ENCODE measurements at regions of chr1 and their contacts with region 1.

Region 1: DNA sequence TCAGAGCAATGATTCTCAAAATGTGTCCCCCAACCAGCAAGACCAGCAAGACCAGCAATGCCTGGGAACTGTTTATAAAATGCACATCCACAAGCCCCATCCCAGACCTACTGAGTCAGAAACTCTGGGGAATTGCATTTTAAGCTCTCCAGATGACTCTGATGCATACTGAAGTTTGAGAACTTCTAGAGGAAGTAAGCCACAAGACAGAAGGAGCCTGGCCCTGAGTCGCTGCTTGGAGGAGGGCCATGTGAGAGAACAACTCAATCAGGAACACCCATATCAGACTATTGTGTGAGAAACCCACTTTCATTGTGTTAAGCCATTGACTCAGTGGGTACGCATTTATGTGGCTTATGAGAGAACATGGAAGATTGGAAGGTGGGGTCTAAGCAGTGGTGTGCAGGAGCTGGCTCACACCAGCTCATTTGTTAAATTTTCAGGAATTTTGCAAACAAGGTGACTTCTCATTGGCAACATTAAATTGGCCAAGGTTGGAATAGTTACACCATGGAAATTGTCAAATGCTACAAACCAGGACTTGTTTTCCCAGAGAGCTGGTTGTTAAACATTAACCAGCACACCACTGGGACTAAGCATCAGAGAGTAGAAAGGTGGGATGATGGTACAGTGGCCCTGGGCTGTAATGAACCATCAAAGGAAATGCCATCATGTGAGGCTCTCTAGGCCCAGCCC is 38.9 kb downstream of the ATP1A1 start:
- DNase-seq: no peak
- H3K4me3 Mint-ChIP-seq: no peak overlapping the region
- H3K27ac Mint-ChIP-seq: no peak overlapping the region
- H3K4me1 Mint-ChIP-seq: peaks cover 33% of the 10 kb centered on the region
- H3K27me3 Mint-ChIP-seq: no peaks in the 10 kb centered on the region

Region 2: DNA sequence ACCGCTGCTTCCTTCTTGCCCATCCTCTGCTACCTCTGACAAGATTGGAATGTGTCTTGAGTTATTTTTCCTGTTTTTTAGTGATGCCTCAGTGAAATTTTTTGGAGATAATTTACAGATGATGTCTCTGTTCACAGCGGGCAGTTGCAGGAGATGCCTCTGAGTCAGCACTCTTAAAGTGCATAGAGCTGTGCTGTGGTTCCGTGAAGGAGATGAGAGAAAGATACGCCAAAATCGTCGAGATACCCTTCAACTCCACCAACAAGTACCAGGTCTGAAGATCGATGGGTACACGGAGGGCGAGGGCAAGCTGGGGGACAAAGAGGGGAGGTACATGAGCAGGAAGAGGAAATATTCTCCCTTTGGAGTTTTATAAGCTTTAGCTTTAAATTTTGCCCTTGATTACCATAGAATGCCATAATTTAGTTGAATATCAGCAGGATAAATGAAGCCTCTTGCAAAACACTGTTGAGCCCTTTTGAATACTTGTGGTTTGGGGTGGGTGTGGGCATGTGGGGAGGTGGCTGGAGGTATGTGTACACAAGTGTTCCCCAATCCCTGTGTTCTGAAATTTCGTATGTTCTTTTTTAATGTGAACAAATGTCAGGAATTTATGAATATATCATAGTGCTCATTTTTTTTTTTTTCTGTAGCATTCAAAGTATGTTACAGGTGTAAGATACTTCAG is 19.1 kb before region 1 on chr1:
- intact Hi-C with region 1: loop called (anchors 2 kb)
- DNase-seq: no peak
- H3K4me3 Mint-ChIP-seq: no peak overlapping the region
- H3K27ac Mint-ChIP-seq: no peak overlapping the region
- H3K4me1 Mint-ChIP-seq: peaks cover 29% of the 10 kb centered on the region
- H3K27me3 Mint-ChIP-seq: no peaks in the 10 kb centered on the region

Measured in activated T-helper 2 cell treated with anti-CD3 and anti-CD28 coated beads, Interferon-gamma antibody, Interleukin-2, Interleukin-4, amounts not matched to agents 10 μg/mL and 5 μg/mL and 100 μg/mL, durations not matched to agents 14 hours and 24 hours and 36 hours (primary cell).